Activated CD8-positive, alpha-beta T cell treated with anti-CD3 and anti-CD28 coated beads for 36 hours (primary cell): ENCODE measurements at regions of chr15 and their contacts with region 1.

Region 1: DNA sequence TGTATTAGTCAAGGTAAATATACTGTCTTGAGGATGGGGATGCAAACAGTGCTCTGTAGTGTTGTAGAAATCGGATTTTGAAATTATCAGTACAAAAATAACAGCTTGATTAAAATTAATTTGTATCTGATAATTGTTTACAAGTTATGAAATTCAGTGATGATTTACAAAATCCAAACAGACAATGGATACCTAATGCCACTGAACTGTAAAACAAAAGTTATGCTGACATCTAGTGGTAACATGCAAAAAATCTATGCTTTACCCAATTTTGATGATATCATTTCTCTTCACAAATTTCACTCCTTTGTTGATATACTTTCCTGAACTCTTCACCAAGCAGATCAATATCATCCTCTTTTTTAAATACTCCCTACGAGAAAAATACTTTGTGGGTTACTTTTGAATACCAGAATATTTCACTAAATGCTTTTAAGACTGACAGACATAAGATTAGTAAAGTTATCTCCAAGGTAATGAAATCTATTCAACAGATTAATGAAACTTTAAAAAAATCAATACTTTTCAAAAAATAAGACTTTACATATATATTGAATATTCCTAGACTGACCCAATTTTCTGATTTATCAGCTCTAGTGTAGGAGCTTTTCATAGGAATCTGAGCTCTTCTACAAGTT is 36.0 kb downstream of the MNS1 start:
- DNase-seq: no peak
- ATAC-seq: no peak
- H3K4me3 Mint-ChIP-seq: no peak overlapping the region
- H3K27ac Mint-ChIP-seq: no peak overlapping the region
- H3K4me1 Mint-ChIP-seq: peaks cover 2% of the 10 kb centered on the region
- H3K27me3 Mint-ChIP-seq: peaks cover 2% of the 10 kb centered on the region
- CTCF ChIP-seq: peak; percentile 73

Region 2: DNA sequence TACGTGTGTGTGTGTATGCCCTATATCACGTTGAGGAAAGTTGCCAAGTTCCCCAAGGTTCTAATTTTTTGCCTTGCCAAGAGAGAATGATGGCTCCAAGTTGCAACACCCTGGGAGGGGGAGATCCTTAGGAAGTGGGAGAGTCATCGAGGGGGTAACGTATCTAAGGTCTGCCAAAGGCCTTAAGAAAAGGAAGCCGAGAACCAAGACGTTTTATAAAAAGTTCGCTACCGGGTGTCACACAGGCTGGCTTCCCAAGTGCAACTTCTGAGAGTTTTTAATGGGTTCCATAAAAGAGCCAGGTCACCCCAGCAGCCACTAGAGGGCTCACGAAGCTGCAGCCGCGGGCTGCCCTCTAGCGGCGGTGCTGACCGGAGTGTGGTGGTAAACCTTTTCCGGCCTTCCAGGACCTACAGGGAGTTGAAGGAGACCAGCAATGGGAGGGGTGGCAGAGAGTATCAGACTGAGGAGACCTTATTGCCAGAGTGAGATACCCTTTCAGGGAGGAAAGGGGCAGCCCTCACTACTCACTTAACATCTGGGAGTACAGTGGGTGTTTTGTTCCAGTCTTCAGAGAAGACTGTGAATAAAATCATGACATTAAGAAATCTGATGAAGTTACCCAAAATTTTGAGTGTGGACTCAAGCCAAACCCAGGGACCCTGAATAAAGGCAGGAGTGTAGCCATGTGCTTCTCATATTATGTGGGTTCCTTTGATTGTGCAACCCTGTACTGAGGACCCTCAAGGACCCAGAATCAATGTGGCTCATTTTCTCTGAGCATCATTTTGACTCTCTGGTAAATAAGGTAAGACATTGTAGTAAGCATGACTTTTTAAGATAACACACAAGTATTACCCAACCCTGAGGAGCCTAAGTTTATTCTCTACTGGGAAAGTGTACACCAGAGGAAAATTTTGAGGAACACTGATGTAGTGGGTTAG is 182.8 kb before region 1 on chr15:
- CTCF ChIA-PET with region 1: interaction called, 28 read pairs
- POLR2A ChIA-PET with region 1: interaction called, 9 read pairs
- intact Hi-C with region 1: loop called (anchors 5 kb)
- DNase-seq: peak; percentile 93
- ATAC-seq: peak; percentile 64
- H3K4me3 Mint-ChIP-seq: peak overlapping the region; percentile 92
- H3K27ac Mint-ChIP-seq: peak overlapping the region; percentile 89
- H3K4me1 Mint-ChIP-seq: peaks cover 21% of the 10 kb centered on the region
- H3K27me3 Mint-ChIP-seq: no peaks in the 10 kb centered on the region
- CTCF ChIP-seq: peak; percentile 100

Region 3: DNA sequence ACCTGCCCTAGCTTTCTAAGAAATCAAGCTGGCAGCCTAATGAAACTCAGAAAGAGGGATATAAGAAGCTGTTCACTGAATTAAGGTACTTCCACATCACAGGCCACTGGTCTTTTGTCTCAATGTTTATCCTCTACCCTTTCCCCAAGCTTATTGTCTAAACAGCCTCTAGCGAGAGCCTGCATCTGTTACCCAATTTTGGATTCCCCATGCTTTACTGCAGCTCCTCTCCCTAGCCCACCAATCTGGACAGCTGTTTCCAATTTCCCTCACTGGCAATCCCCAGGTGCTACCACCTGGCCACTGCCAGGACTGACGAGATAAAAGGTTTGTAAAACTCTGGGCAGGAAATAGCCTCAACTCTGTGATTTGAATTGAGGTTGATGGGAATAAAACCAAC is 121.8 kb before region 1 on chr15:
- CTCF ChIA-PET with region 1: no interaction called
- POLR2A ChIA-PET with region 1: no interaction called
- intact Hi-C with region 1: no loop called
- DNase-seq: no peak
- ATAC-seq: no peak
- H3K4me3 Mint-ChIP-seq: no peak overlapping the region
- H3K27ac Mint-ChIP-seq: no peak overlapping the region
- H3K4me1 Mint-ChIP-seq: no peaks in the 10 kb centered on the region
- H3K27me3 Mint-ChIP-seq: no peaks in the 10 kb centered on the region
- CTCF ChIP-seq: no peak

Region 4: GRCh38 chr15:56411122-56411749 is 17.7 kb before region 1 on chr15:
- CTCF ChIA-PET with region 1: no interaction called
- POLR2A ChIA-PET with region 1: no interaction called
- intact Hi-C with region 1: no loop called
- DNase-seq: no peak
- ATAC-seq: no peak
- H3K4me3 Mint-ChIP-seq: no peak overlapping the region
- H3K27ac Mint-ChIP-seq: no peak overlapping the region
- H3K4me1 Mint-ChIP-seq: no peaks in the 10 kb centered on the region
- H3K27me3 Mint-ChIP-seq: no peaks in the 10 kb centered on the region
- CTCF ChIP-seq: no peak

Region 5: DNA sequence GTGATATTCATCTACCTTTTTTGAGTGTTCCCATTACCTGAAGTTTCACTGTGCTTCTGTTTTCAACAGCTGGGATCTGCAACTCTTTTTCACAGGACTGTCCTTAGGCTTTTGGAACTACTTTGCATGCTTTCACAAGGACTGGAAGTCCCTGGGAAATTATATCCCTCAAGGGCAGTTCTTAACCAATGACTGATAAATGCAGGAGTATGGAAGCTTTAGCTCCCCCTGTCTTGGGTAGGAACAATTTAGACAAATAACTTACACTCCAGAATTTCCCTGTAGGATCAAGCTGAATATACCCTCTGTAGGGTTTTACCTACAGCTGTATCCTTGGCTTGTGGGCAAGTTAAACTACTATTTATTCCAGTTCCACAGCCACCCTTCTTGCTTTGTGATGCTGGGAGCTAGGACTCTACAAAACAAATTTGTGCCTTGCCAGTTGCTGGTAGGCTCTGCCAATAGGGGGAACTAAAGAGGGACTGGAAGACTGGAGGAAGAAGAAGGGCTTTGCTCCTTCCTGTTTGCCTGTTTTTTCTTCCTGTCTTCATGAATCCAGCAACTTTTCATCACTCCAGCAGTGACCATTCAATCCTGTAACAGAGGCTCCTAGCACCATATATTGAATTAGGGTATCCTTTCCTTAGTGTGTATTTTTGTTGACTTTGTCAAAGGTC is 311.2 kb after region 1 on chr15:
- CTCF ChIA-PET with region 1: no interaction called
- POLR2A ChIA-PET with region 1: no interaction called
- intact Hi-C with region 1: no loop called
- DNase-seq: peak; percentile 5
- ATAC-seq: peak; percentile 47
- H3K4me3 Mint-ChIP-seq: no peak overlapping the region
- H3K27ac Mint-ChIP-seq: no peak overlapping the region
- H3K4me1 Mint-ChIP-seq: no peaks in the 10 kb centered on the region
- H3K27me3 Mint-ChIP-seq: peaks cover 8% of the 10 kb centered on the region
- CTCF ChIP-seq: peak; percentile 43